ENCODE measurements at regions of chr15 and their contacts with region 1.

Region 1: DNA sequence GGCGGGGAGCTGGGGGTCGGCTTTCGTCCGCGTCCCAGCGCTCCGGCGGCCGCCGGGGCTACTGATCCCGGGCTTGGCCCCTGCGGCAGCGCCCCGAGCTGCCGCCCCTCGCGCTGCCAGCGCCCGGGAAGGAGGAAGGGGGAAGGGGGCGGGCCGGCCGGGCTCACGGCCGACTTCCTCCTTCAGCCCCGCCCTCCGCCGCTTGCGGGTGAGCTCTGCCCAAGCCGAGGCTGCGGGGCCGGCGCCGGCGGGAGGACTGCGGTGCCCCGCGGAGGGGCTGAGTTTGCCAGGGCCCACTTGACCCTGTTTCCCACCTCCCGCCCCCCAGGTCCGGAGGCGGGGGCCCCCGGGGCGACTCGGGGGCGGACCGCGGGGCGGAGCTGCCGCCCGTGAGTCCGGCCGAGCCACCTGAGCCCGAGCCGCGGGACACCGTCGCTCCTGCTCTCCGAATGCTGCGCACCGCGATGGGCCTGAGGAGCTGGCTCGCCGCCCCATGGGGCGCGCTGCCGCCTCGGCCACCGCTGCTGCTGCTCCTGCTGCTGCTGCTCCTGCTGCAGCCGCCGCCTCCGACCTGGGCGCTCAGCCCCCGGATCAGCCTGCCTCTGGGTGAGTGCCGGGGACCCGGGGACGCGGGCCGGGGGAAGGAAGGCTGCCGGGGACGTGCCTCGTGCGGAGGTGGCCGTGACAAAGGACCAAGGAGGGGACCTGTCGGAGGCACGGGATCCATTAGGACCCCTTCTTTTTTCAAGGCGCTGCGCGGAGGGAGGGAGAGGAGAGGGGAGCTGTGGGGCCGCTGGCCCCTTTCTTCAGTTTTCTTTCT is at the start of gene SEMA4B:
- DNase-seq: peak; percentile 52 to 81 (median 71)
- ATAC-seq: peak; percentile 90 to 93
- H3K4me3 Mint-ChIP-seq: peak within 1 kb of the TSS; percentile 82 to 94 (median 88)
- H3K27ac Mint-ChIP-seq: peak within 1 kb of the TSS; percentile 84 to 92 (median 90)
- H3K4me1 Mint-ChIP-seq: peaks cover 8 to 55% (median 22%) of the 10 kb centered on the region in 4 donors
- H3K27me3 Mint-ChIP-seq: no peaks in the 10 kb centered on the region
- polyA plus RNA-seq, gene SEMA4B: 4.1 to 6.8 (median 5.0) TPM

Region 2: DNA sequence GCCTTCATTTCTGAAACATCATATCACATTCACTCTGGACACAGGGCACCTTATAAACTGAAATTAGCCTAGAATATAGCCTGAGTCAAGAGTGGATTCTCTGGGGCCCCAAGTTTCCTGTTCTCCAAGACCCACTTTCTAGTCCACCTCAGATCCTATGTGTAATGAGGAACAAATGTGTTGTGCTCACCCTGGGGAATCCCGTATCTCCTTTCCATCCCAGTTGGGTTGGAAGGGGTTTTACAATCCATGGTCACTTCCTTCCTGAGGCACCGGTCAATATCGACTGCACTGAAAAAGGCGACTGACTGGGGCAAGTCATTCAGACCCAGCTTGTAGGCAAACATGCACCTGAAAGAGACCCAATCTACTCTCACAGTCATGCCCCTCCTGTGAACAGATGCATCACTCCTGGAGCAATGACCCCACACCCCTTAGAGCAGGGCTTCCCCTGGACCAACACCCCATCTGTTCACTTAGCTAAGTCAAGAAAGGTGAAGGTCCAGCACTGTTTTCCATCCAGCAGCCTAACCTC is 884.1 kb before region 1 on chr15:
- POLR2A ChIA-PET with region 1: no interaction called
- DNase-seq: no peak
- ATAC-seq: no peak
- H3K4me3 Mint-ChIP-seq: no peak overlapping the region
- H3K27ac Mint-ChIP-seq: peak overlapping the region in 3 of 10 donors; percentile 4 to 26 (median 21)
- H3K4me1 Mint-ChIP-seq: peaks cover 4 to 32% (median 12%) of the 10 kb centered on the region in 4 donors
- H3K27me3 Mint-ChIP-seq: no peaks in the 10 kb centered on the region

Region 3: DNA sequence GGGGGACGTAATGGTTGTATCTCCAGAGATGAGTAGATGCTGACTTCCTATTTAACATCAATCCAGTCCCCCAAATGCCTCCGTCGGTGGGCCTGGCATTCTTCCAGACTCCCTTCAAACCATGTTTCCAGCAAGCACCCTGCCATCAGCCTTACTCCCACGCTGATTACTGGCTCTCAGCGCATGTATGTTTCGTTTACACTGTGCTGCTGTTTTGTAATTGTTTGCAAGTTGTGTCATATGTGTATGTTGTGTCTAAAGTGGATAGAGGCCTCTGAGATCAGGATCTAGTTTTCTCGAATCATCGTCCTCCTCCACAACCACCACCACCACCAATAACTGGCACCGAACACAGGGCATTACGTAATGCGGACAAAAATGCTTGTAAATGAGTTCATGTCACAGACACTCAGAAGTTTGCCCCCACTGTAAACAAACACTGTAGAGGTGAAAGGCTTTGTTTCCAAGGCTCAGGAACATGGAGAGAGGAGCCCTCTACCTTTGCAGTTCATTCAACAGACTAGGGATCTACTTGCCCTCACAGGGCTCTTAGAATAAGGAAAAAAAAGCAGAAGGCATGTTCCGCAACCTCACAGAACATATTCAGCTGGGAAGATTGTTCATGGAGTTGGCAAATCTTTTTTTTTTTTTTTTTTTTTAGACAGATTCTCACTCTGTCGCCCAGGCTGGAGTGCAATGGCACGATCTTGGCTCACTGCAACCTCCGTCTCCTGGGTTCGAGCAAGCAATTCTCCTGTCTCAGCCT is 46.3 kb before region 1 on chr15:
- POLR2A ChIA-PET with region 1: no interaction called
- DNase-seq: no peak
- ATAC-seq: no peak
- H3K4me3 Mint-ChIP-seq: no peak overlapping the region
- H3K27ac Mint-ChIP-seq: peak overlapping the region in 1 of 10 donors; percentile 79
- H3K4me1 Mint-ChIP-seq: peaks cover 0 to 19% (median 11%) of the 10 kb centered on the region in 4 donors
- H3K27me3 Mint-ChIP-seq: no peaks in the 10 kb centered on the region

Region 4: DNA sequence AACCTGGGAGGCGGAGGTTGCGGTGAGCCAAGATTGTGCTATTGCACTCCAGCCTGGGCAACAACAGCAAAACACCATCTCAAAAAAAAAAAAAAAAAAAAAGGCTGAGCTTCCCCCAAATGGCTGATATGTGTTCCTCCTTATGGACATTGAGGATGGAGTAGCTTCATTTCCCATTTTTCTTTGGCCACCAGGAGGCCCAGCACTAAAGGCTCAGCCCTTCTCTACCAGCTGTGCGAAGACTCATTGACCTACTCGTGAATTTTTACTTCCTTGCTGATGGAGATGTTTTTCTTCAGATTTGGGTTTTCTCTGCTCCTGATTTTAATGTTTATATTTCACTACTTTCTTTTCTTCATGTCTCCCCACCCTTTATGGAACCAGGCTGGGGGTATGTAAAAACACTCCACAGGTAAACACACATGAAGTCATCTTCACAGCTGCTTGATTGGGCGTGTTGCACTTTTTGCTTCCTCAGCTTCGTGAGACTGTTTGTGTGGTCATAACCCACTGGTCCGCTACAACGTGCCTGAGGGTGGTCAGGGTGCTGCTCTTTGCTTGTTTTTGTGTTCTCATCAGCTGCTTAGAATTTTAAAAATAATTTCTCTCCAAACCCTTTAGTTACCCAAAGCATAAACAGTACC is 13.3 kb after region 1 on chr15:
- POLR2A ChIA-PET with region 1: interaction called, 21 read pairs
- DNase-seq: peak in 1 of 10 donors; percentile 53
- ATAC-seq: no peak
- H3K4me3 Mint-ChIP-seq: peak overlapping the region in 1 of 10 donors; percentile 65
- H3K27ac Mint-ChIP-seq: peak overlapping the region in 2 of 10 donors; percentile 67 to 84
- H3K4me1 Mint-ChIP-seq: peaks cover 18 to 76% (median 40%) of the 10 kb centered on the region in 4 donors
- H3K27me3 Mint-ChIP-seq: no peaks in the 10 kb centered on the region

Region 5: DNA sequence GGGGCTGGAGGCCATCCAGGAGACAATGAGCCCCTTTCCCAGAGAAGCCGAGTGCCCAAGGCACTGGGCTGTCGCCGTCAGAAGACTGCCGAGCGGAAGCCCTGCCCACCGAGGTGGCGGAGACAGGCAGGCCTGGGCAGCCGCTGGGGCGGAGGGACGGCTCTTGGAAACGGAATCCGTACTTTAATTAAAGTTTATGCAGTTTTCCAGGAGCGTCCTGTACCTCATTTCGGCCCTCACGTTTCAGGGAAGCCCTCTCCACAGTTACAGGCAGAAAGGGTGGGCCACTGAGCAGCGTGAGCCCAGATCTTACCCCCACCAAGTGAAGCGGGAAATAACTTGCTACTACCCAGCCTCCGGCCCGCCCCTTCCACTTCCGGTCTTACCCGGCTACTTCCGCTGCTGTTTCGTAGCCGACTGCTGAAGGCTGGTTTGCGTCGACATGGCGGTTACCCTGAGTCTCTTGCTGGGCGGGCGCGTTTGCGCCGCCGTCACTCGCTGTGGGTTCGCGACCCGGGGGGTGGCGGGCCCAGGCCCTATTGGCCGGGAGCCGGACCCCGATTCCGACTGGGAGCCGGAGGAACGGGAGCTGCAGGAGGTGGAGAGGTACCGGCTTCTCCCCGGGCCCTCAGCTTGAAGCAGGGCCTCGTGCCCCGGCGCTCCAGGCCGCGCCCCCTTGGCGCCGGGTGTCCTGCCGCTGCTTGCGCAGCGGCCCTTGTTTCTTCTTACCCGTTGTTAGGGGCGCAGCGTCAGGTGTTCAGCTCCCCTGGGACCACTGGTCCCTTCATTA is 64.1 kb after region 1 on chr15 and contains the start of gene NGRN:
- POLR2A ChIA-PET with region 1: interaction called, 10 read pairs
- DNase-seq: peak; percentile 78 to 97 (median 92)
- ATAC-seq: peak; percentile 87 to 89
- H3K4me3 Mint-ChIP-seq: peak within 1 kb of the TSS; percentile 95 to 98 (median 97)
- H3K27ac Mint-ChIP-seq: peak within 1 kb of the TSS; percentile 96 to 99 (median 99)
- H3K4me1 Mint-ChIP-seq: peaks cover 25 to 56% (median 55%) of the 10 kb centered on the region in 4 donors
- H3K27me3 Mint-ChIP-seq: no peaks in the 10 kb centered on the region
- polyA plus RNA-seq, gene NGRN: 25.9 to 42.9 (median 26.5) TPM

Measured in naive thymus-derived CD8-positive, alpha-beta T cell (primary cell).